GM12878 (cell line): ENCODE measurements at regions of chr19 and their contacts with region 1.

Region 1: GRCh38 chr19:48872182-48872883 is at the start of gene PPP1R15A:
- DNase-seq: peak; percentile 97
- ATAC-seq: peak; percentile 39
- H3K4me3 ChIP-seq: peak within 1 kb of the TSS; percentile 100
- H3K27ac ChIP-seq: peak within 1 kb of the TSS; percentile 94
- H3K4me1 ChIP-seq: peaks cover 20% of the 10 kb centered on the region
- H3K27me3 ChIP-seq: no peaks in the 10 kb centered on the region
- CTCF ChIP-seq: no peak; a peak in 1 of 6 replicates
- EP300 ChIP-seq: peak in 1 of 2 experiments; percentile 41; a peak in 1 of 4 replicates
- POLR2A ChIP-seq: peak; percentile 100
- RAD21 ChIP-seq: no peak
- polyA plus RNA-seq, gene PPP1R15A: 0.68 to 0.90 TPM

Region 2: GRCh38 chr19:48660854-48661731 is 211.2 kb before region 1 on chr19:
- CTCF ChIA-PET with region 1: no interaction called
- POLR2A ChIA-PET with region 1: no interaction called
- RAD21 ChIA-PET with region 1: no interaction called
- SMC1A ChIA-PET with region 1: no interaction called
- in situ Hi-C with region 1: no loop called
- intact Hi-C with region 1: no loop called
- DNase-seq: peak; percentile 83
- ATAC-seq: peak; percentile 97
- H3K4me3 ChIP-seq: peak overlapping the region; percentile 1; the same call in 1 of the 2 replicates
- H3K27ac ChIP-seq: peak overlapping the region; percentile 96
- H3K4me1 ChIP-seq: peaks cover 9% of the 10 kb centered on the region
- H3K27me3 ChIP-seq: no peaks in the 10 kb centered on the region
- CTCF ChIP-seq: no peak
- EP300 ChIP-seq: no peak
- POLR2A ChIP-seq: peak; percentile 22; the same call in 1 of the 2 replicates
- RAD21 ChIP-seq: no peak

Region 3: DNA sequence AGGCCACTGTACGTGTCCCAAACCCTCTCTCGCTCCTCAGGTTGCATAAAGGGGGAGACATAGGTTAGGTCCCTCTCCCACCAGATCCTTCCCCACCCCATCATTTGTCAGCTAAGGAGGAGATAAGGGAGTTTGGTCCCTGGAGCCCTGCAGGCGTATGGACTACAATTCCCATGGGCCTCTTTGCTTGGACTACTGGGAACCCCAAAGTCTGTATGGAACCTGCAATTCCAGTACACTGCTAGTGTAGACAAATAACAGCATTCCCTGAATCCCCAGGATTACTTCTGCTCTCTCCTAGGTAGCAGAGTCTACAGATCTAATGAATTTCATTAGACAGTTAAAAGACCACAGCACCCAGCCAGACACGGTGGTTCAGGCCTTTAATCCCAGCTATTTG is 20.0 kb before region 1 on chr19:
- CTCF ChIA-PET with region 1: no interaction called
- POLR2A ChIA-PET with region 1: no interaction called
- RAD21 ChIA-PET with region 1: no interaction called
- SMC1A ChIA-PET with region 1: no interaction called
- in situ Hi-C with region 1: no loop called
- intact Hi-C with region 1: no loop called
- DNase-seq: no peak
- ATAC-seq: no peak
- H3K4me3 ChIP-seq: no peak overlapping the region
- H3K27ac ChIP-seq: no peak overlapping the region
- H3K4me1 ChIP-seq: peaks cover 7% of the 10 kb centered on the region
- H3K27me3 ChIP-seq: no peaks in the 10 kb centered on the region
- CTCF ChIP-seq: no peak
- EP300 ChIP-seq: no peak
- POLR2A ChIP-seq: no peak
- RAD21 ChIP-seq: no peak

Region 4: GRCh38 chr19:48887861-48888612 is 15.7 kb after region 1 on chr19:
- CTCF ChIA-PET with region 1: interaction called, 12 read pairs
- POLR2A ChIA-PET with region 1: interaction called, 55 read pairs
- RAD21 ChIA-PET with region 1: interaction called, 9 read pairs
- SMC1A ChIA-PET with region 1: interaction called, 19 read pairs
- in situ Hi-C with region 1: no loop called
- intact Hi-C with region 1: loop called (anchors 2 kb)
- DNase-seq: no peak
- ATAC-seq: no peak
- H3K4me3 ChIP-seq: no peak overlapping the region
- H3K27ac ChIP-seq: no peak overlapping the region
- H3K4me1 ChIP-seq: peaks cover 10% of the 10 kb centered on the region
- H3K27me3 ChIP-seq: no peaks in the 10 kb centered on the region
- CTCF ChIP-seq: no peak
- EP300 ChIP-seq: no peak
- POLR2A ChIP-seq: no peak
- RAD21 ChIP-seq: no peak

Region 5: DNA sequence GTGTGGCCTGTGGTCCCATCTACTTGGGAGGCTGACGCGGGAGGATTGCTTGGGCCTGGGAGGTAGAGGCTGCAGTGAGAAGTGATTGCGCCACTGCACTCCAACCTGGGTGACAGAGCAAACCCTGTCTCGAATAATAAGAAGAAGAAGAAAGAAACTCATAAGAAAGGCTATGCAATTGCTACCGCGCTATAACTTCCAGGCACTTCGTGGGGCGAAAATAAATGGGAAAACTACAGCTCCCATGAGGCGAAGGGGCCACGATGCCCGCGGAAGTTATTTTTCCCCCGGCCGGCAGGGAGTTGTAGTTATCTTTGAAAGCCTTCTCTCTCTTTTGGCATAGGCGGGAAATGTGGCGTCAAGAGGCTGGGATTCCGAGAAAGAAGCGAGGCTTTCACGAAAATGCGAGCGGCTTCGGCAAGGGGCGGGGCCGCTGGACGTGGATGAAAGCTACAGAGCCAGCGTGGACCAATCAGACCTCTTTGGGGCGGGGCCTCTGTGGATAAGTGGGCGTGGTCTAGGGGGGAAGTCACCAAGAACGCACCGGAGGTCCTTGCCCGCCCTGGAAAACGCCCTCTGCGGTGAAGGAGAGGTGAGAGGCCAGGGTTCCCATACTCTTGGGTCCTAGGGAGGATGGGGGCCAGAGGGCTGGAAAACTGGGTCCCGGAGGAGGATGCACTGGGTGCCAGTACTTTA is 27.6 kb after region 1 on chr19 and contains the start of gene NUCB1:
- CTCF ChIA-PET with region 1: interaction called, 5 read pairs
- POLR2A ChIA-PET with region 1: interaction called, 22 read pairs
- RAD21 ChIA-PET with region 1: interaction called, 13 read pairs
- SMC1A ChIA-PET with region 1: interaction called, 16 read pairs
- in situ Hi-C with region 1: no loop called
- intact Hi-C with region 1: no loop called
- DNase-seq: peak; percentile 89
- ATAC-seq: peak; percentile 95
- H3K4me3 ChIP-seq: peak within 1 kb of the TSS; percentile 99
- H3K27ac ChIP-seq: peak within 1 kb of the TSS; percentile 47
- H3K4me1 ChIP-seq: no peaks in the 10 kb centered on the region; the same call in 1 of the 2 replicates
- H3K27me3 ChIP-seq: no peaks in the 10 kb centered on the region
- CTCF ChIP-seq: 0 out of 6 replicates have a peak, but pooled peaks of 1 of the 3 experiments have one; percentile 13
- EP300 ChIP-seq: no peak
- POLR2A ChIP-seq: peak; percentile 69
- RAD21 ChIP-seq: no peak
- polyA plus RNA-seq, gene NUCB1: 1.8 to 3.2 TPM

Region 6: GRCh38 chr19:48954595-48955310 is 82.4 kb after region 1 on chr19 and contains the start of gene BAX:
- CTCF ChIA-PET with region 1: interaction called, 4 read pairs
- POLR2A ChIA-PET with region 1: interaction called, 12 read pairs
- RAD21 ChIA-PET with region 1: interaction called, 4 read pairs
- SMC1A ChIA-PET with region 1: interaction called, 3 read pairs
- in situ Hi-C with region 1: no loop called
- intact Hi-C with region 1: no loop called
- DNase-seq: peak; percentile 92
- ATAC-seq: peak; percentile 98
- H3K4me3 ChIP-seq: peak within 1 kb of the TSS; percentile 98
- H3K27ac ChIP-seq: peak within 1 kb of the TSS; percentile 99
- H3K4me1 ChIP-seq: peaks cover 5% of the 10 kb centered on the region; the same call in 1 of the 2 replicates
- H3K27me3 ChIP-seq: no peaks in the 10 kb centered on the region
- CTCF ChIP-seq: peak in 1 of 3 experiments; percentile 18; a peak in 1 of 6 replicates
- EP300 ChIP-seq: no peak
- POLR2A ChIP-seq: peak; percentile 86
- RAD21 ChIP-seq: 0 out of 2 replicates have a peak, but pooled peaks have one; percentile 20
- polyA plus RNA-seq, gene BAX: 7.2 to 15.3 TPM

Region 7: DNA sequence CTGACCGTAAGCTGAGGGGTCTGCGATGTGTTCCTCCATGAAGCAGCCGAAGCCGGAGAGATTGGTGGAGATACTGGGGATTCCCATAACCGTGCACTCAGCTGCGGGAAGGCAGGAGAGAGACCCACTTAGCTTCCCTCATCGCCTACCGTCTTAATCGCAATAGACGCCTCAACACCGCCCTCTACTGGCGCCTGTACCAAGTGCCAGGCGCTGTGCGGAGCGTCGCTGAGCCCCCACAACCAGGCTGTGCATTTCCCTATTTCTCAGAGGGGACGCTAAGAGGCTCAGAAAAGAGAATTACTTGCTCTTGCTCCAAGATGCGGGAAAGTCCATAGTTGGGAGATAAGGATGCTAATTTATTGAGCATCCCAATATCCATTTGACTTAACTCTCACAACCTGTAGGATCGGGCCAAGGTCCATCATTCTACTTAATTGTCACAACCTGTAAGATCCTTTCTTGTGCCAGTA is 98.6 kb after region 1 on chr19:
- CTCF ChIA-PET with region 1: interaction called, 12 read pairs
- POLR2A ChIA-PET with region 1: interaction called, 53 read pairs
- RAD21 ChIA-PET with region 1: interaction called, 26 read pairs
- SMC1A ChIA-PET with region 1: interaction called, 28 read pairs
- in situ Hi-C with region 1: no loop called
- intact Hi-C with region 1: no loop called
- DNase-seq: no peak
- ATAC-seq: peak; percentile 85
- H3K4me3 ChIP-seq: no peak overlapping the region
- H3K27ac ChIP-seq: 0 out of 2 replicates have a peak overlapping the region, but pooled peaks have one; percentile 13
- H3K4me1 ChIP-seq: peaks cover 17% of the 10 kb centered on the region
- H3K27me3 ChIP-seq: no peaks in the 10 kb centered on the region
- CTCF ChIP-seq: peak; percentile 92 to 97 (median 94)
- EP300 ChIP-seq: no peak
- POLR2A ChIP-seq: no peak
- RAD21 ChIP-seq: peak; percentile 86

Region 8: GRCh38 chr19:49042177-49042576 is 169.8 kb after region 1 on chr19:
- CTCF ChIA-PET with region 1: no interaction called
- POLR2A ChIA-PET with region 1: no interaction called
- RAD21 ChIA-PET with region 1: no interaction called
- SMC1A ChIA-PET with region 1: no interaction called
- in situ Hi-C with region 1: no loop called
- intact Hi-C with region 1: no loop called
- DNase-seq: no peak
- ATAC-seq: no peak
- H3K4me3 ChIP-seq: no peak overlapping the region
- H3K27ac ChIP-seq: no peak overlapping the region
- H3K4me1 ChIP-seq: no peaks in the 10 kb centered on the region
- H3K27me3 ChIP-seq: no peaks in the 10 kb centered on the region
- CTCF ChIP-seq: no peak
- EP300 ChIP-seq: no peak
- POLR2A ChIP-seq: no peak
- RAD21 ChIP-seq: no peak